Stomach (tissue), 19 donors: ENCODE measurements at regions of chr9 and their contacts with region 1.

Region 1: DNA sequence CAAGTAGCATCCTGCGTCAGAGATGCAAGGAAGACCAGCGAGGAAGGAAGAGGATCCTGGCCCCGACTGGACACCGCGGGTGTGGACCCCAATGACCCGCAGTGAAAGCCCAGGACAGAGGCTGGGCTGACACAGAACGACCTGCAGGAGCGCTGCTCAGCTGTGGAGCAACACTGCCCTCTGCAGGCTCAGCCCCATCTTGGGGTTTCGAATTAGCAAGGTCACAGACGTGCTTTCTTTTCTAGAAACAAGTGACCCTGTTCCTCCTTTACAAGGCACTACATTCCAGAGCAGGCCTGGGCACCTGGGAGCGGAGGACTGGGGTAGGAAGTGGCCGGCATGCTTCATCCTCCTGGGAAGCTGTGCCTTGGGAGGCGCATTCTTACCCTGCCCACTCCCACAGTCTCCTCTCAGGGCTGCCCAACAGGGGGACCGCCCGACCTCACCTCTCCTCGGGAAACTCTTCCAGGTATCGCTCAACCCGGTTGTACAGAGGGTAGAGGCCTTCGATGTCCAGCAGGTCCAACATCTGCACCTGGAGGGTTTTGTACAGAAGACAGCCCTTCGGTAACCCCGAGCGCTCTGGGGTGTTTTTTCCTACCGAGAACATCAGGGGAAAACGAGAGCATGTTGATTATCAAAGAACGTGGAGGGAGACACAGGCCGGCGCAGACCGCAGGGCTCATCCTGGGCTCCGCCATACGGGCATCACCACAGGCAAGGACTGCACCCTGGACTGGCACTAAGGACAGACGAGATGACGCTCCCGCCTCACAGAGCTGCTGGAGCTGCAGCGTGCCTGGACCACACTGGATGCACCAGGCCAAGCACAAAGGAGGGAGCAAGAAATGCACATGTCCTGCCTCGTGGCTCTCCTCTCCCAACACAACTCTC is 35.0 kb downstream of the IPPK start:
- DNase-seq: peak; percentile 74 to 92
- H3K4me3 ChIP-seq: no peak overlapping the region
- H3K27ac ChIP-seq: peak overlapping the region in 2 of 5 donors; percentile 20 to 39
- H3K4me1 ChIP-seq: peaks cover 0 to 13% (median 4%) of the 10 kb centered on the region in 4 donors
- H3K27me3 ChIP-seq: no peaks in the 10 kb centered on the region
- CTCF ChIP-seq: peak in 5 of 7 experiments; percentile 80 to 91 (median 84)
- EP300 ChIP-seq: no peak
- POLR2A ChIP-seq: no peak

Region 2: GRCh38 chr9:92342825-92343488 is 292.0 kb before region 1 on chr9:
- intact Hi-C with region 1: loop called (anchors 10 kb)
- DNase-seq: no peak
- H3K4me3 ChIP-seq: no peak overlapping the region
- H3K27ac ChIP-seq: no peak overlapping the region
- H3K4me1 ChIP-seq: no peaks in the 10 kb centered on the region
- H3K27me3 ChIP-seq: no peaks in the 10 kb centered on the region
- CTCF ChIP-seq: no peak
- EP300 ChIP-seq: no peak
- POLR2A ChIP-seq: no peak

Region 3: DNA sequence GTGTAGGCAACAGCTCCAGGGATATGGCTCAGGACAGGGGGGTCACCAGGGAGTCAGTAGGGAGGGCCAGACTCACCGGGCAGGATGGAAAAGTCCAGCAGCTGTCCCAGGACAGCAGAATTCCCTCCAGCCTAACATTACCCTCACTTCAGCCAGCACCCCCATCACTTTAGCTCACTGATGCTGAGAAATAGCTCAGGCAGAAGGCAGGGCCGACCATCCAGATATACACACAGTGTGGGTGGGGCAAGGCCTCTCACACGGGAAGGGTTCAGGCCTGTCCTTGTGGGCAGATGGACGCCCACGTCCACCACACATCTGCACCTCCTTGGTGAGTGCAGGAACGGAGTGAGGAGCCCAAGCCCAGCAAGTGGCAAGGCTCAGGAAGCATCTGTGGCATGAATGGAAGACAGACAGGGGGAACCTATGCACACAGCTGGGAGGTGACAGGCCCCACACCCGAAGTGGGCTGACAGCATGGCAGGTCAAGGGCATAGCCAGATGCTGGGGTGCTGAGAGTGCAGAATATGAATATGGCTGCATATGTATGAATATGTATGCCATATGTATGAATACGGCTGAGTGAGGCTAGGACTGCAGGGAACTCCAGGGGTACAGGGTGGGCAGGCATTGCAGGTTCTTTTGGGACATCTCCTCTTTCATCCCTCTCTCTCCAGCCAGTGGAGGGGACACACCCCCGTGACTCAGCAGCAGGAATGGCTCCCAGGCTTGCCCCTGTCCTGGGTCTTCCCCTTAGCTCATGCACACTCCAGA is 112.7 kb after region 1 on chr9:
- intact Hi-C with region 1: no loop called
- DNase-seq: no peak
- H3K4me3 ChIP-seq: no peak overlapping the region
- H3K27ac ChIP-seq: no peak overlapping the region
- H3K4me1 ChIP-seq: peaks cover 31 to 71% (median 45%) of the 10 kb centered on the region in 4 donors
- H3K27me3 ChIP-seq: no peaks in the 10 kb centered on the region
- CTCF ChIP-seq: no peak
- EP300 ChIP-seq: no peak
- POLR2A ChIP-seq: no peak

Region 4: DNA sequence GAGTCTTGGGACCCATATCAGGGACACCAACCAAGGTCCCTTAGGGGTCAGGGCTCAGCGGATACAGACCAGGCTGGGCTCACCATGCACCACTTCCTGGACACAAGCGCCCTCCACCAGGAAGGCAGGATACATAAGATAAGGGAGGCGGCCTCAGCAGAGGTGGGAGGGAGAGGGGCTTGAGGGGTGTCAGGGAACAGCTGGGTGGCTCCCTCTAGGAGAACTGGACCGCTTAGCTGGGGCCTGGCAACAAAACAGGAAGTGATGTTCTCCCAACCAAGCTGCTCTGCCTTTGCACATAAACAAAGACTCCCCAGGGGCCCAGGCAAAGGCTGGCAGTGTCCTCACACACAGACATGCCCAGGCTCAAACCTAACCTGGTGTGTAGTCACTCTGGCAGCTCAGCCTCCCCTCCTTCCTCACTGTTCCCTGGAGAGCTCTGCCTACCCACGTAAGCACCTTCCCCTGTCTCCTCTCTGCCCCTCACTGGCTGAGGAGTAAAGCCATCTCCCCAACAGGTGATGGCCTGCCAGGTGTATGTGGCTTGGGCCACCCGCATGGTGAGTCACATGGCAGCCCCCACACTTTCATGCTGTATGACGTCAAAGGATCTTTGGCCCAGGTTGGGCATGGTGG is 135.5 kb after region 1 on chr9:
- intact Hi-C with region 1: no loop called
- DNase-seq: peak in 1 of 2 donors; percentile 72
- H3K4me3 ChIP-seq: no peak overlapping the region
- H3K27ac ChIP-seq: peak overlapping the region in 2 of 5 donors; percentile 31 to 50
- H3K4me1 ChIP-seq: peaks cover 7 to 47% (median 12%) of the 10 kb centered on the region in 4 donors
- H3K27me3 ChIP-seq: no peaks in the 10 kb centered on the region
- CTCF ChIP-seq: no peak
- EP300 ChIP-seq: no peak
- POLR2A ChIP-seq: no peak